CD4-positive, alpha-beta memory T cell (primary cell): ENCODE measurements at regions of chrX and their contacts with region 1.

Region 1: GRCh38 chrX:71254092-71254941 is at the start of gene ZMYM3:
- DNase-seq: peak; percentile 75 to 86 (median 77)
- H3K4me3 ChIP-seq: peak within 1 kb of the TSS; percentile 52 to 81
- H3K4me3 Mint-ChIP-seq: peak within 1 kb of the TSS; percentile 90 to 98 (median 92)
- H3K27ac ChIP-seq: peak within 1 kb of the TSS; percentile 77
- H3K27ac Mint-ChIP-seq: peak within 1 kb of the TSS; percentile 93 to 97 (median 95)
- H3K4me1 ChIP-seq: peaks cover 25% of the 10 kb centered on the region
- H3K4me1 Mint-ChIP-seq: peaks cover 5 to 32% (median 13%) of the 10 kb centered on the region in 4 donors
- H3K27me3 ChIP-seq: no peaks in the 10 kb centered on the region
- H3K27me3 Mint-ChIP-seq: no peaks in the 10 kb centered on the region
- total RNA-seq, gene ZMYM3: 28.0 to 28.2 TPM

Region 2: GRCh38 chrX:71068049-71068763 is 186.1 kb before region 1 on chrX and contains the start of gene SNX12:
- CTCF ChIA-PET with region 1: no interaction called
- POLR2A ChIA-PET with region 1: interaction called, 4 read pairs
- intact Hi-C with region 1: loop called (anchors 1 kb)
- DNase-seq: peak; percentile 88 to 93 (median 91)
- H3K4me3 ChIP-seq: peak within 1 kb of the TSS; percentile 53 to 69
- H3K4me3 Mint-ChIP-seq: peak within 1 kb of the TSS; percentile 88 to 97 (median 93)
- H3K27ac ChIP-seq: peak within 1 kb of the TSS; percentile 84
- H3K27ac Mint-ChIP-seq: peak within 1 kb of the TSS; percentile 93 to 98 (median 97)
- H3K4me1 ChIP-seq: peaks cover 16% of the 10 kb centered on the region
- H3K4me1 Mint-ChIP-seq: peaks cover 2 to 33% (median 14%) of the 10 kb centered on the region in 4 donors
- H3K27me3 ChIP-seq: no peaks in the 10 kb centered on the region
- H3K27me3 Mint-ChIP-seq: no peaks in the 10 kb centered on the region
- total RNA-seq, gene SNX12: 36.7 to 36.9 TPM

Region 3: GRCh38 chrX:71144651-71145050 is 109.7 kb before region 1 on chrX and contains the start of gene NLGN3:
- CTCF ChIA-PET with region 1: no interaction called
- POLR2A ChIA-PET with region 1: no interaction called
- intact Hi-C with region 1: no loop called
- DNase-seq: no peak
- H3K4me3 ChIP-seq: no peak within 1 kb of the TSS
- H3K4me3 Mint-ChIP-seq: peak within 1 kb of the TSS in 3 of 8 donors; percentile 17 to 62 (median 39)
- H3K27ac ChIP-seq: no peak within 1 kb of the TSS
- H3K27ac Mint-ChIP-seq: peak within 1 kb of the TSS in 4 of 7 donors; percentile 3 to 85 (median 47)
- H3K4me1 ChIP-seq: peaks cover 11% of the 10 kb centered on the region
- H3K4me1 Mint-ChIP-seq: peaks cover 6 to 10% (median 8%) of the 10 kb centered on the region in 4 donors
- H3K27me3 ChIP-seq: no peaks in the 10 kb centered on the region
- H3K27me3 Mint-ChIP-seq: no peaks in the 10 kb centered on the region
- total RNA-seq, gene NLGN3: 2.2 to 2.3 TPM

Region 4: DNA sequence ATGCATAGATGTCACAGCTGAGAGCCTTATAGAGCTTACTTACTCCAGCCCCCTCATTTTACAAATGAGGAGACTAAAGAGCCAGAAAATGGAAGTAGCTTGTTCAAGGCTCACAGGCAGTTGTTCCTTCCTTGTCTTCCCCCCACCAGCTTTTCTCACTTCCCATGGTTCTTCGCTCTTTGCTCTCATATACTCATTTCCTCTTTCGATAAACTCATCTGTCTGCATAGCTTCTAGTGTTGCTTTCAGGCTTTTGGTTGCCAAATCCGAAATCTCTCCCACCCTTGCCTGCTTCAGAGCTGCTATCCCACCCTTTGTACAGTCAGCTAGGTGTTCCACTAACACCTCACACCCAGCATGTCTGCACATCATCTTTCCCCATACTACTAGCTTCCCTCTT is 56.3 kb before region 1 on chrX:
- CTCF ChIA-PET with region 1: interaction called, 4 read pairs
- POLR2A ChIA-PET with region 1: interaction called, 18 read pairs
- intact Hi-C with region 1: loop called (anchors 5 kb)
- DNase-seq: peak in 2 of 5 donors; percentile 15 to 23
- H3K4me3 ChIP-seq: peak overlapping the region; percentile 29 to 60
- H3K4me3 Mint-ChIP-seq: peak overlapping the region; percentile 85 to 96 (median 90)
- H3K27ac ChIP-seq: peak overlapping the region; percentile 61
- H3K27ac Mint-ChIP-seq: peak overlapping the region; percentile 86 to 95 (median 89)
- H3K4me1 ChIP-seq: peaks cover 8% of the 10 kb centered on the region
- H3K4me1 Mint-ChIP-seq: peaks cover 11 to 34% (median 21%) of the 10 kb centered on the region in 4 donors
- H3K27me3 ChIP-seq: no peaks in the 10 kb centered on the region
- H3K27me3 Mint-ChIP-seq: no peaks in the 10 kb centered on the region

Region 5: DNA sequence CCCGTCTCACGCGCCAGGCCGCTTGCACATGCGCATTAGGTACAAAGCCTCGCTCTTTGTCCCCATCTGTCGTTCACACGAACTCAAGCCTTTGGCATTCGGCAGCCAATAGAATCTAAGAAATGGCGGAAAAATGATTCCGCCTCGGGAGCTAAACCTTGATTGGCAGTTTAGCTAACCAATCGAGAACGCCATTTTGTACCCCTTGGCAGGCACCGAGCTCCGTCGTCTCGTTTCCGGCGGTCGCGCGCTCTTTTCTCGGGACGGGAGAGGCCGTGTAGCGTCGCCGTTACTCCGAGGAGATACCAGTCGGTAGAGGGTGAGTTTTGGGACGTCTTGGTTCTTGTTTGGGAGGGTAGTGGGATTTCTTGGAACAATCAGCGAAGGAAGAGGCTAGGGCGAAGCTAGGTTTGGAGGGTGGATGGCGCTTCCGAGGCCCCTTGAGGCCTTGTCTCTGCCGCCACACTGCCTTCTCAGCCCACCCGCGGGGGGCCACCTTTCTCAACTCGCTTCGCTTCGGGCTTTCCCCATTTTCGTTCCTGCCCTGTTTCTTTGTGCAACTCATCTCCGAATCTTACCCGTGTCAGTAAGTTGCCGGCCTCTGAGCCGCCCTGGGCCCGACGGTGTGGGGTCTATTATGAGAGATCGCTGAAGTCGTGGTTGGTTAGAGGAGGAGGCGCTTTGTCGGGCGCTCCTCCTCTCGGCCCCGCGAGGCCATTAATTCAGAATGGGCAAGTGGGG is 29.3 kb after region 1 on chrX and contains the start of gene NONO:
- CTCF ChIA-PET with region 1: interaction called, 7 read pairs
- POLR2A ChIA-PET with region 1: interaction called, 50 read pairs
- intact Hi-C with region 1: loop called (anchors 1 kb)
- DNase-seq: peak; percentile 86 to 95 (median 92)
- H3K4me3 ChIP-seq: peak within 1 kb of the TSS; percentile 62 to 63
- H3K4me3 Mint-ChIP-seq: peak within 1 kb of the TSS; percentile 96 to 100 (median 98)
- H3K27ac ChIP-seq: peak within 1 kb of the TSS; percentile 95
- H3K27ac Mint-ChIP-seq: peak within 1 kb of the TSS; percentile 97 to 100 (median 99)
- H3K4me1 ChIP-seq: peaks cover 34% of the 10 kb centered on the region
- H3K4me1 Mint-ChIP-seq: peaks cover 7 to 42% (median 13%) of the 10 kb centered on the region in 4 donors
- H3K27me3 ChIP-seq: no peaks in the 10 kb centered on the region
- H3K27me3 Mint-ChIP-seq: no peaks in the 10 kb centered on the region
- total RNA-seq, gene NONO: 300 to 314 TPM